ENCODE measurements at regions of chr14 and their contacts with region 1.

Region 1: GRCh38 chr14:61730756-61731373 is 31.4 kb upstream of the SNAPC1 start:
- DNase-seq: no peak
- H3K4me3 Mint-ChIP-seq: no peak overlapping the region
- H3K27ac Mint-ChIP-seq: peak overlapping the region; percentile 28
- H3K4me1 Mint-ChIP-seq: peaks cover 5% of the 10 kb centered on the region
- H3K27me3 Mint-ChIP-seq: no peaks in the 10 kb centered on the region
- CTCF ChIP-seq: peak; percentile 52

Region 2: GRCh38 chr14:61420326-61420725 is 310.5 kb before region 1 on chr14:
- CTCF ChIA-PET with region 1: no interaction called
- POLR2A ChIA-PET with region 1: no interaction called
- intact Hi-C with region 1: no loop called
- DNase-seq: peak; percentile 88
- H3K4me3 Mint-ChIP-seq: peak overlapping the region; percentile 45
- H3K27ac Mint-ChIP-seq: peak overlapping the region; percentile 71
- H3K4me1 Mint-ChIP-seq: peaks cover 32% of the 10 kb centered on the region
- H3K27me3 Mint-ChIP-seq: no peaks in the 10 kb centered on the region
- CTCF ChIP-seq: no peak

Region 3: GRCh38 chr14:61461808-61462275 is 269.0 kb before region 1 on chr14:
- CTCF ChIA-PET with region 1: interaction called, 28 read pairs
- POLR2A ChIA-PET with region 1: interaction called, 3 read pairs
- intact Hi-C with region 1: loop called (anchors 1 kb)
- DNase-seq: peak; percentile 78
- H3K4me3 Mint-ChIP-seq: no peak overlapping the region
- H3K27ac Mint-ChIP-seq: peak overlapping the region; percentile 22
- H3K4me1 Mint-ChIP-seq: peaks cover 27% of the 10 kb centered on the region
- H3K27me3 Mint-ChIP-seq: no peaks in the 10 kb centered on the region
- CTCF ChIP-seq: peak; percentile 60

Region 4: DNA sequence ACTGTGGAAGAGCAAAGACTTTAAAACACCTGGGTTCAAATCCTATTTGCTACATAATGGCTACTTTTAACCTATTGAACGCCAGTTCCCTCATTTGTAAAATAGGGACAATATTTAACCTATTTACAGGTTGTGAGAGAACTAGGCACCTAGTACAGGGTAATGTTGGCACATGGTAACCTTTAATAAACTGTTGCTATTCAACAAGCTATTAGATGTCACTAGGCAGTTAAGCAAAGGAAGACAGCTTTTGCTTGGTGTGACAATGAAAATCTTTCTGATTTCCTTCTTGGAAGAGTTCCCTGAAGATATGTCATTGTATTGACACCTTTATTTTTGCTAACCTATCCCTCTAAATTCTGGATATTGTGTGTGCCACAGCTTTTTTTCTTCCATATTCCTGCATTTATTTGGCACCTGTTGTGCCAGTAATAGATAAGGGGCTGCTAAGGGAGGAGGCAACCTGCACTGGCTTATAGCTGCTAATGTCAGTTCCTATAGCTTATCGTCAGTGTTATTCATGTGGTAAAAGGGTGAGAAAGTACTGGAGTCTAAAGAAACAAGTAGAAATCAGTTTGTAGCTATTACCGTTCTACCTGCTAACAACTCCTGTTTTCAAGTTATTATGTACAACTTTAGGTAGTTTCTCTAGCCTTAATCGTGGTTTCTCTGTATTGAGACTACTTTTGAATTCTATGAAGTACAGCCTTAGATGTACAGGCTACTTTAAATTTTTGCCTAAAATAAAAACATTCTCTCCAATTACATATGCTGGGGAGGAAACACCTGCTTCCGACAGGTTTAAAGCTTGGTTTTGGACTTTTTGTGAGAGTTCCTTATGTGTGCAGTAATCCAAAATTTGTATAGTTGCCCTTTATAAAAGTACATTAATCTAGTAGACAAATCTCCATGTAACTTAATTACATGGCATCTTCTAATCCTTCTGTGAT is 11.2 kb before region 1 on chr14:
- CTCF ChIA-PET with region 1: interaction called, 16 read pairs
- POLR2A ChIA-PET with region 1: interaction called, 5 read pairs
- intact Hi-C with region 1: no loop called
- DNase-seq: no peak
- H3K4me3 Mint-ChIP-seq: no peak overlapping the region
- H3K27ac Mint-ChIP-seq: no peak overlapping the region
- H3K4me1 Mint-ChIP-seq: peaks cover 14% of the 10 kb centered on the region
- H3K27me3 Mint-ChIP-seq: no peaks in the 10 kb centered on the region
- CTCF ChIP-seq: no peak

Region 5: GRCh38 chr14:61802010-61802568 is 71.2 kb after region 1 on chr14:
- CTCF ChIA-PET with region 1: no interaction called
- POLR2A ChIA-PET with region 1: no interaction called
- intact Hi-C with region 1: no loop called
- DNase-seq: no peak
- H3K4me3 Mint-ChIP-seq: no peak overlapping the region
- H3K27ac Mint-ChIP-seq: no peak overlapping the region
- H3K4me1 Mint-ChIP-seq: no peaks in the 10 kb centered on the region
- H3K27me3 Mint-ChIP-seq: no peaks in the 10 kb centered on the region
- CTCF ChIP-seq: no peak

Region 6: DNA sequence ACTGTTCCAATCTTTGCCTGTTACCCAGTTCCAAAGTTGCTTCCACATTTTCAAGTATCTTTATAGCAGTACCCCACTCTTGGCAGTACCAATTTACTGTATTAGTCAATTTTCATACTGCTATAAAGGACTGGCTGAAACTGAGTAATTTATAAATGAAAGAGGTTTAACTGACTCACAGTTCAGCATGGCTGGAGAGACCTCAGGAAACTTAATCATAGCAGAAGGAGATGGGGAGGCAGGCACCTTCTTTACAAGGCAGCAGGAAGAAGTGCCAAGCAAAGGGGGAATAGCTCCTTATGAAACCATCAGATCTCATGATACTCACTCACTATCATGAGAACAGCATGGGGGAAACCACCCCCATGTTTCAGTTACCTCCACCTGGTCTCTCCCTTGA is 246.4 kb after region 1 on chr14:
- CTCF ChIA-PET with region 1: no interaction called
- POLR2A ChIA-PET with region 1: no interaction called
- intact Hi-C with region 1: no loop called
- DNase-seq: no peak
- H3K4me3 Mint-ChIP-seq: no peak overlapping the region
- H3K27ac Mint-ChIP-seq: no peak overlapping the region
- H3K4me1 Mint-ChIP-seq: peaks cover 7% of the 10 kb centered on the region
- H3K27me3 Mint-ChIP-seq: no peaks in the 10 kb centered on the region
- CTCF ChIP-seq: no peak